ENCODE measurements at regions of chr18 and their contacts with region 1.

Region 1: GRCh38 chr18:36129300-36130038 is at the starts of genes ELP2 and SLC39A6:
- DNase-seq: peak; percentile 95
- H3K4me3 ChIP-seq: peak within 1 kb of the TSS; percentile 85 to 90
- H3K4me3 Mint-ChIP-seq: peak within 1 kb of the TSS; percentile 92 to 98 (median 98)
- H3K27ac ChIP-seq: peak within 1 kb of the TSS; percentile 100
- H3K27ac Mint-ChIP-seq: peak within 1 kb of the TSS; percentile 97 to 99 (median 98)
- H3K4me1 ChIP-seq: peaks cover 43% of the 10 kb centered on the region
- H3K4me1 Mint-ChIP-seq: peaks cover 39 to 80% (median 60%) of the 10 kb centered on the region in 4 donors
- H3K27me3 ChIP-seq: no peaks in the 10 kb centered on the region
- H3K27me3 Mint-ChIP-seq: no peaks in the 10 kb centered on the region
- total RNA-seq, gene ELP2: 139 to 143 TPM
- total RNA-seq, gene SLC39A6: 18.9 to 19.7 TPM

Region 2: GRCh38 chr18:34976899-34977837 is 1152.3 kb before region 1 on chr18:
- CTCF ChIA-PET with region 1: no interaction called
- POLR2A ChIA-PET with region 1: no interaction called
- intact Hi-C with region 1: loop called (anchors 10 kb)
- DNase-seq: peak; percentile 58 to 81 (median 66)
- H3K4me3 ChIP-seq: peak overlapping the region; percentile 60 to 82
- H3K4me3 Mint-ChIP-seq: peak overlapping the region; percentile 90 to 97 (median 94)
- H3K27ac ChIP-seq: no peak overlapping the region
- H3K27ac Mint-ChIP-seq: peak overlapping the region in 4 of 7 donors; percentile 83 to 90 (median 88)
- H3K4me1 ChIP-seq: peaks cover 14% of the 10 kb centered on the region
- H3K4me1 Mint-ChIP-seq: peaks cover 15 to 30% (median 19%) of the 10 kb centered on the region in 4 donors
- H3K27me3 ChIP-seq: peaks cover 9% of the 10 kb centered on the region
- H3K27me3 Mint-ChIP-seq: peaks cover 10 to 12% of the 10 kb centered on the region in 2 donors

Region 3: GRCh38 chr18:35580701-35581539 is 548.5 kb before region 1 on chr18:
- CTCF ChIA-PET with region 1: no interaction called
- POLR2A ChIA-PET with region 1: no interaction called
- intact Hi-C with region 1: loop called (anchors 1 kb)
- DNase-seq: peak; percentile 52 to 69 (median 64)
- H3K4me3 ChIP-seq: peak overlapping the region in 1 of 2 donors; percentile 49
- H3K4me3 Mint-ChIP-seq: peak overlapping the region; percentile 61 to 82 (median 76)
- H3K27ac ChIP-seq: peak overlapping the region; percentile 59
- H3K27ac Mint-ChIP-seq: no peak overlapping the region
- H3K4me1 ChIP-seq: peaks cover 18% of the 10 kb centered on the region
- H3K4me1 Mint-ChIP-seq: peaks cover 18 to 30% (median 20%) of the 10 kb centered on the region in 4 donors
- H3K27me3 ChIP-seq: no peaks in the 10 kb centered on the region
- H3K27me3 Mint-ChIP-seq: peaks cover 2 to 5% of the 10 kb centered on the region in 2 donors

Region 4: GRCh38 chr18:36067055-36067957 is 62.2 kb before region 1 on chr18 and contains the start of gene RPRD1A:
- CTCF ChIA-PET with region 1: interaction called, 3 read pairs
- POLR2A ChIA-PET with region 1: interaction called, 31 read pairs
- intact Hi-C with region 1: loop called (anchors 1 kb)
- DNase-seq: peak; percentile 94 to 97 (median 94)
- H3K4me3 ChIP-seq: peak within 1 kb of the TSS; percentile 81 to 87
- H3K4me3 Mint-ChIP-seq: peak within 1 kb of the TSS; percentile 92 to 98 (median 95)
- H3K27ac ChIP-seq: peak within 1 kb of the TSS; percentile 74
- H3K27ac Mint-ChIP-seq: peak within 1 kb of the TSS; percentile 89 to 98 (median 96)
- H3K4me1 ChIP-seq: peaks cover 32% of the 10 kb centered on the region
- H3K4me1 Mint-ChIP-seq: peaks cover 31 to 48% (median 40%) of the 10 kb centered on the region in 4 donors
- H3K27me3 ChIP-seq: no peaks in the 10 kb centered on the region
- H3K27me3 Mint-ChIP-seq: peaks cover 0 to 1% of the 10 kb centered on the region in 2 donors
- total RNA-seq, gene RPRD1A: 40.1 to 42.3 TPM

Region 5: DNA sequence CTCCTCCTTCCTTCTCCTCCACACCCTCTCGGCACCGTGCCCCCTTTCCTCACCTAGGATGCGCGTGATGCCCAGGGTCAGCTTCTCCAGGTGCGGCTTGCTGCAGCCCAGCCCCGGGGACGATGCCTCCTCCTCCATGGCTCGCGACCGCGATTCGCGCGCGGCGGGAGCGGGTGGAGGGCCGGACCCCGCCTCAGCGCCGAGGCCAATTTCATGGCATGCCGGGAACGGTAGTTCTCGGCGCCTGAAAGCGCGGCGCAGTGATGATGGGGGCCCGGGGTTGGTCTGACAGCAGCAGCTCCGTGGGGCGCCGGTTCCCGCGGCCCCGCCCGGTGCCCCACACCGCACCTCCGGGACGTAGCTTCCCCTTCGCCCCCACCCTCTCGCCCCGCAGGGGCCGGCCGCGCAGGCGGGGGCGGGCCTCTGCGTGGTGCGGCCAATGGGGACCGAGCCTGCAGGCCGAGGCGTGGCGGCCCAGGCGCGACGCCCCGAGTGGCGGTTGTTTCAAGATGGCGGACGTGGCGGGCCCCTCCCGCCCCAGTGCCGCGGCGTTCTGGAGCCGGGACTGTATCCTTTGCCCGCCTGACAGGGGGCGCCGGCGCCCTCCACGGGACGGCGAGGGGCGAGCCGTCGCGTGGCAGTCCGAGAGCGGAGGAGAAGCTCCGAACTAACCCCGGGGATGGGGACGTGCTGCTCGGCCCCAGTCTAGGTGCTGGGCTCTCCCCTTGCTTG is 699.3 kb after region 1 on chr18 and contains the starts of genes KIAA1328 and TPGS2:
- CTCF ChIA-PET with region 1: no interaction called
- POLR2A ChIA-PET with region 1: interaction called, 5 read pairs
- intact Hi-C with region 1: loop called (anchors 1 kb)
- DNase-seq: peak; percentile 85 to 91 (median 90)
- H3K4me3 ChIP-seq: peak within 1 kb of the TSS; percentile 94 to 99
- H3K4me3 Mint-ChIP-seq: peak within 1 kb of the TSS; percentile 84 to 97 (median 90)
- H3K27ac ChIP-seq: peak within 1 kb of the TSS; percentile 82
- H3K27ac Mint-ChIP-seq: peak within 1 kb of the TSS; percentile 80 to 96 (median 94)
- H3K4me1 ChIP-seq: peaks cover 26% of the 10 kb centered on the region
- H3K4me1 Mint-ChIP-seq: peaks cover 22 to 55% (median 36%) of the 10 kb centered on the region in 4 donors
- H3K27me3 ChIP-seq: no peaks in the 10 kb centered on the region
- H3K27me3 Mint-ChIP-seq: no peaks in the 10 kb centered on the region
- total RNA-seq, gene KIAA1328: 12.3 to 15.7 TPM
- total RNA-seq, gene TPGS2: 51.6 to 54.7 TPM

Measured in CD4-positive, alpha-beta memory T cell (primary cell).